WTC11 (cell line): ENCODE measurements at regions of chr19 and their contacts with region 1.

Region 1: DNA sequence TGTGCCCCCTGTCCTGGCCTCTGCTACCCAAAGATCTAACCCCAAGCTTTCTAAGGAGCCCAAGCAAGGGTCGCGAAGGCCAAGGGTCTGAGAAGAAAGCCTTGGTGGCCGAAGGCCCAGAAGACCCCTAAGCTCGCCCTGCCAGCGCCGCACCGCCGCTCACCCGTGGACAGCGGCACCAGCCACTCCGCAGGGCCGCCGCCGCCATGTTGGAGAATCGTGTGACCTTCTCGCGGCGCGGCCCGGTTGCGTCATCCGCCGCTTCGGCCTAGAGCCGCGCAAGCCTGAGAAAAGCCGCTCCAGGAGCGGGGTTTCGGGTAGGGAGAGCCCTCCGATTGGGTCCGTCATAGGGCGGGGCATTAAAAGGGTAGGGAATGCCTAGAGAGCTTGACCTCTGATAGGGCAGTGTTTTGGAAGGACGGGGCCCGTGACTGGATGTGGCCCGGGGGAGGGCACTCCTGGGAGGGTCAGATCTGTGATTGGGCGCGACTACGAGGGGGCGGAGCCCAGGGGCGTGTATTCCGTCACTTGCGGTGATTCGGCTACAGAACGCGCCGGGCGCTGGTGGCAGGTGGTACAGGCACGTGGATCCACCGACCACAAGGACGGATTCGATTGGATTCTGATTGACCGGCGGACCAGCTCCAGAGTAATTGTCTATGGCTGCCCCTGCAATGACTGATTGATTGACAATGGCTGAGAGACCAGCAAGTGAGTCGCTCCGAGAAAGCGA is at the start of gene TIMM44:
- DNase-seq: peak; percentile 99
- ATAC-seq: peak; percentile 99
- H3K4me3 Mint-ChIP-seq: peak within 1 kb of the TSS; percentile 88
- H3K27ac Mint-ChIP-seq: peak within 1 kb of the TSS; percentile 99
- H3K4me1 Mint-ChIP-seq: peaks cover 8% of the 10 kb centered on the region; the same call in 1 of the 2 replicates
- H3K27me3 Mint-ChIP-seq: peaks cover 2% of the 10 kb centered on the region; the same call in 1 of the 2 replicates
- CTCF ChIP-seq: no peak
- total RNA-seq, gene TIMM44: 103 to 129 TPM (median 103 TPM) in 3 replicates

Region 2: GRCh38 chr19:7861955-7862951 is 81.4 kb before region 1 on chr19:
- CTCF ChIA-PET with region 1: interaction called, 23 read pairs
- POLR2A ChIA-PET with region 1: interaction called, 4 read pairs
- DNase-seq: peak; percentile 99
- ATAC-seq: peak; percentile 71
- H3K4me3 Mint-ChIP-seq: peak overlapping the region; percentile 79
- H3K27ac Mint-ChIP-seq: no peak overlapping the region
- H3K4me1 Mint-ChIP-seq: peaks cover 21% of the 10 kb centered on the region
- H3K27me3 Mint-ChIP-seq: peaks cover 77% of the 10 kb centered on the region
- CTCF ChIP-seq: peak; percentile 22; the same call in 1 of the 2 replicates

Region 3: GRCh38 chr19:7879836-7880235 is 63.8 kb before region 1 on chr19:
- CTCF ChIA-PET with region 1: no interaction called
- POLR2A ChIA-PET with region 1: no interaction called
- DNase-seq: no peak
- ATAC-seq: no peak; the same call in 1 of the 2 replicates
- H3K4me3 Mint-ChIP-seq: no peak overlapping the region
- H3K27ac Mint-ChIP-seq: no peak overlapping the region
- H3K4me1 Mint-ChIP-seq: no peaks in the 10 kb centered on the region; the same call in 1 of the 2 replicates
- H3K27me3 Mint-ChIP-seq: peaks cover 24% of the 10 kb centered on the region
- CTCF ChIP-seq: no peak

Region 4: GRCh38 chr19:7919610-7920518 is 23.7 kb before region 1 on chr19 and contains the start of gene SNAPC2:
- CTCF ChIA-PET with region 1: interaction called, 31 read pairs
- POLR2A ChIA-PET with region 1: interaction called, 6 read pairs
- DNase-seq: peak; percentile 98
- ATAC-seq: peak; percentile 50
- H3K4me3 Mint-ChIP-seq: peak within 1 kb of the TSS; percentile 75
- H3K27ac Mint-ChIP-seq: peak within 1 kb of the TSS; percentile 76
- H3K4me1 Mint-ChIP-seq: peaks cover 8% of the 10 kb centered on the region
- H3K27me3 Mint-ChIP-seq: peaks cover 49% of the 10 kb centered on the region
- CTCF ChIP-seq: no peak
- total RNA-seq, gene SNAPC2: 23.2 to 24.3 TPM (median 23.7 TPM) in 3 replicates

Region 5: DNA sequence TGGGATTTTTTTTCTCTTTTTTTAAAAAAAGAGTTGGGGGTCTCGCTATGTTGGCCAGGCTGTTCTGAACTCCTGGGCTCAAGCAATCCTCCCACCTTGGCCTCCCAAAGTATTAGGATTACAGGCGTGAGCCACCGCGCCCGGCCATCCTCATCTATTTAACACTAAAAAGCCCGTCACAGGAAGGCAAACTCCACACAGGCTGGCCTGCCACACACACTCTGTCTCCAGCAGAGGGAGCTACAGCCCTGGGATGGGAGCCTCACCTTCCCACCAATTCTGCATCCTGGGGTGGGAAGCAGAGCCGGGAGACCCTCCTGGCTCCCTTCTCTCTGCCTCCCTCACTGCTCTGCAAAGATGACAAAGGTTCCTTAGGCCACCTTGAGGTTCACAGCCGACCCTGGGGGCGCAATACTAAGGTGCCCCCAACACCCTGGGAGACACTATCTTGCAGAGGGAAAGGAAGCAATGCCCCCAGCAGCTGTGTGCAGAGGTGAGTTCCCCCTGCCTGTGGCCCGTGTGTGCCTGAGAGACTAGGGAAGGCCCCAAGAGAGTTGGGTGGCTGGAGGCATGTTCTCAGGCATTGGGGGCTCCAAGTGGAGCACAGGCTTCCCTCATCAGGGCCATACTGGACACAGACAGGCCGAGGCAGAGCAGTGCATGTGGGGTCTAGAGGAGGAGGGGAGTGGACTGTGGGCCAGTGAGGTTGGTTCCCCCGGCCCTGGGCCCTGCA is 27.3 kb after region 1 on chr19:
- CTCF ChIA-PET with region 1: interaction called, 90 read pairs
- POLR2A ChIA-PET with region 1: interaction called, 7 read pairs
- DNase-seq: peak; percentile 85
- ATAC-seq: peak; percentile 81
- H3K4me3 Mint-ChIP-seq: no peak overlapping the region
- H3K27ac Mint-ChIP-seq: peak overlapping the region; percentile 80
- H3K4me1 Mint-ChIP-seq: peaks cover 24% of the 10 kb centered on the region
- H3K27me3 Mint-ChIP-seq: no peaks in the 10 kb centered on the region
- CTCF ChIP-seq: peak; percentile 76

Region 6: GRCh38 chr19:8005534-8006256 is 62.1 kb after region 1 on chr19 and contains the start of gene ELAVL1:
- CTCF ChIA-PET with region 1: interaction called, 44 read pairs
- POLR2A ChIA-PET with region 1: interaction called, 7 read pairs
- DNase-seq: peak; percentile 90
- ATAC-seq: peak; percentile 72
- H3K4me3 Mint-ChIP-seq: peak within 1 kb of the TSS; percentile 98
- H3K27ac Mint-ChIP-seq: peak within 1 kb of the TSS; percentile 97
- H3K4me1 Mint-ChIP-seq: peaks cover 31% of the 10 kb centered on the region
- H3K27me3 Mint-ChIP-seq: no peaks in the 10 kb centered on the region
- CTCF ChIP-seq: no peak
- total RNA-seq, gene ELAVL1: 144 to 160 TPM (median 149 TPM) in 3 replicates

Region 7: DNA sequence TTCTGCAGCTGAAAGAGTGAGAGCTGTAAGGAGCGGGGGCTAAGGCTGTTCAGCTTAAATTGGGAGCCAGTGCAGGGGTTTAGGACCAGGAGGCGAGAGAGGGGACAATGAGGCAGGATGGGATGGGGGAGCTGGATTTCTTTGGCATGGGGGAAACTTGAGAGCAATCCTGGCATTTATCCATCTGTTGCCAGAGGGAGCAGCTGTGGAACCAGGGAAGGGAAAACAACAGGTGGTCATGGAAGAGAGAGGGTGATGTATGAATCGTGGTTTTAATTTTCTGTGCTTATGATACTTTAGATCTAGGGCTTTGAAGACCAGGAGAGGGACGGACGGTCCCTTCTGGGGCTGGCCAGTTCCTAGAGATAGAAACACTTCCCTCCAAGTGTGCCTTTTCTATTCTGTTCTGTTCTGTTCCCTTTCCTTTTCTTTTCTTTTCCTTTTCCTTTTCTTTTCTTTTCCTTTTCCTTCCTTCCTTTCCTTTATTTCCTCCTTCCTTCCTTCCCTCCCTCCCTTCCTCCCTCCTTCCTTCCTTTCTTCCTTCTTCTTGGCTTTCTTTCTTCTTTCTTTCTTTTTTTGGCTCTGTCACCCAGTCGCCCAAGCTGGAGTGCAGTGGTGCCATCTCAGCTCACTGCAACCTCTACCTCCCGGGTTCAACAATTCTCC is 93.0 kb after region 1 on chr19:
- CTCF ChIA-PET with region 1: no interaction called
- POLR2A ChIA-PET with region 1: no interaction called
- DNase-seq: no peak
- ATAC-seq: no peak
- H3K4me3 Mint-ChIP-seq: no peak overlapping the region
- H3K27ac Mint-ChIP-seq: no peak overlapping the region
- H3K4me1 Mint-ChIP-seq: peaks cover 12% of the 10 kb centered on the region
- H3K27me3 Mint-ChIP-seq: peaks cover 13% of the 10 kb centered on the region
- CTCF ChIP-seq: no peak

Region 8: DNA sequence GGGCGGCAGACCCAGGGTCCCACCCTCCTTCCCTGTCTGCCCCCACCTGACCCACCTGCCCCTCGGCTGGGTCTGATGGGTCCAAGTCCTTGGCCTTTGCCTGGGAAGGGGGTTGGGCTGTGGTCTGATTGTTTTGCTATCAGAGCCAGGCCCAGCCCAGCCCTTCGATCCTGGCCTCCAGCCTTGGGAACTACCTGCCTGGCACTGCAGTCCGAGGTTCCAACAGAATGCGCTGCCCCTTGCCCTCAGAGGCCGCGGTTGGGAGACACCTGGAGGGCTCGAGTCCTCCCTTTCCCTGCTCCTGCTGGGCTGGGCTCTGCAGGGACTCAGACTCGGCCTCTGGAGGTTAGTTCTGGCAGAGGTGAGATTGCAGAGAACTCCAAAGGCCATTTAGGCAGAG is 110.6 kb after region 1 on chr19:
- CTCF ChIA-PET with region 1: interaction called, 10 read pairs
- POLR2A ChIA-PET with region 1: interaction called, 3 read pairs
- DNase-seq: no peak
- ATAC-seq: no peak
- H3K4me3 Mint-ChIP-seq: no peak overlapping the region
- H3K27ac Mint-ChIP-seq: no peak overlapping the region
- H3K4me1 Mint-ChIP-seq: peaks cover 17% of the 10 kb centered on the region
- H3K27me3 Mint-ChIP-seq: peaks cover 23% of the 10 kb centered on the region
- CTCF ChIP-seq: no peak

Region 9: DNA sequence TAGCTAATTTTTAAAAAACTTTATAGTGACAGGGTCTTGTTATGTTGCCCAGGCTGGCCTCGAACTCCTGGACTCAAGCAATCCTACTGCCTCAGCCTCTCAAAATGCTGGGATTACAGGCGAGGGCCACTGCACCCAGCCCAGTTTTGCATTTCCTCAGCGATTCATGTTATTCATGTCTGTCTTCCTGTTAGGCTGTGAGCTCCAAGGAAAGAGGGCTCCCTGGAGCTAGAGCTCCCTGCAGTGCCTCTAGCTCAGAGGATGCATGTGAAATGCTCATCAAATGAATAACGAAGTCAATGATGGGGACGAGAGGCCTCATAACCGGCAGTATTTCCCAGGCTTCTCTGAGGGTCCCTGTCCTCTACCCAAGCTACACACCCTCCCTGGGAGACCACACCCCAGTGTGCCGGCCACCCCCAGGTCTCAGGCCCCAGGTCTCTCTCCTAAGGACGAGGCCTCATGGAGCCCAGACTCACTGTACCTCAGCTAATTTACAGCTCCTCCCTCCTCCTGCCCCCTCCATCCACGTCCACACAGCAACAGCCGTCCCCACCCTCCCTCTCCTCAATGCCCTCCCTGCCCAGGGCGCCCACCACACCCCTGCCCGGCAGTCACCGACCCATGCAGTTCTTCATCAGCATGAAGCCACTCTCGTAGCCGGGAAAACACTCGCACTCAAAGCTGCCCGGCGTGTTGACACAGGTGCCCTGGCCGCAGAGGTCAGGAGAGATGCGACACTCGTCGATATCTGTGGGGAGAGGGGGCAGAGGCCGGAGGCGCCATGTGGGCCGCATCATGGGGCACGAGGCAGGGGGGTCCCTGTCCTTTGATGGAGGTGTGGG is 177.2 kb after region 1 on chr19:
- CTCF ChIA-PET with region 1: interaction called, 10 read pairs
- POLR2A ChIA-PET with region 1: no interaction called
- DNase-seq: peak; percentile 42
- ATAC-seq: peak; percentile 83
- H3K4me3 Mint-ChIP-seq: peak overlapping the region; percentile 13; the same call in 1 of the 2 replicates
- H3K27ac Mint-ChIP-seq: peak overlapping the region; percentile 90
- H3K4me1 Mint-ChIP-seq: peaks cover 14% of the 10 kb centered on the region
- H3K27me3 Mint-ChIP-seq: no peaks in the 10 kb centered on the region; the same call in 1 of the 2 replicates
- CTCF ChIP-seq: no peak